Transverse colon (tissue), 4 donors: ENCODE measurements at regions of chr13 and their contacts with region 1.

Region 1: DNA sequence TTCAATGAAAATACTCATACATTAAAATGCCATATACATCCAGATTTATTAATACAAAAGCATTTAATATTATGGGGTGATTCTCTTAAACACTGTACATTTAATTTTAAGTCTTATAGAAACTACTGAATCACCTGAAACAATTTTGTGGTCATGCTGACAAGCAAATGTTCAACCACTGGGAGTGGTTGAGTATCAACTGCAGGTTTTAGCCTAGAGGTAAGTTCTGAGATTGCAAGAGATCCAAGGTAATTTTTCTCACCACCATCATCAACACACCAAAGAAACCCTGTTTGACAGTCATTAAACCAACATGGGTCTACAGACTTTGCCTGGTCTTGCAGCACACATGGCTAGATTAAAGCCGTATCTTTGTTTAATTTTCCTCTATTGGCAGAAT is 196.3 kb downstream of the LHFPL6 start:
- DNase-seq: no peak
- H3K4me3 ChIP-seq: no peak overlapping the region
- H3K27ac ChIP-seq: no peak overlapping the region
- H3K4me1 ChIP-seq: peaks cover 0 to 9% (median 0%) of the 10 kb centered on the region in 4 donors
- H3K27me3 ChIP-seq: no peaks in the 10 kb centered on the region
- CTCF ChIP-seq: no peak
- EP300 ChIP-seq: no peak
- POLR2A ChIP-seq: no peak

Region 2: DNA sequence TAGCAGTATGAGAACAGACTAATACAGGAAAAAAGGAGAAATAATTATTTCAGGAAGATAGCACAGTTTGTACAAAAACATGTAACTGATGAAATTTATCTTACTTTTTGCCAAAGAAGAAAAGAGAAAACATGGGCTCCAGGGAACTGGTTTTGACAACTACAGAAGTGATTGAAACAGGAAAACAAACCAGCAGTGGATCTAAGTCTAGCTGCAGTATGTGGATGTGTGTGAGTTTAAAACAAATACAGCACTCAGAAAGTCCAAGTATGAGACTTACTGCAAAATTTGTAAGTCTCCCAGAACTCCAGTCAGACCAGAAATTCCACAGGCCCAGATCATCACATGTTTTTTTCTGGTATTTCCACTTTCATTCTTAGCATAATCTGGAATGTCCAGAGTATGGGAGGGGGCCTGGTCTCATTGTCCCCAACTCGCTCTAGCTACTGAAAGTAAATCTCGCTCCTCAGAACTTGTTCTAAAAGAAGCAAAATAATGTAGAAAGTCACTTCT is 109.0 kb before region 1 on chr13:
- in situ Hi-C with region 1: no loop called
- intact Hi-C with region 1: loop called (anchors 1 kb)
- DNase-seq: no peak
- H3K4me3 ChIP-seq: no peak overlapping the region
- H3K27ac ChIP-seq: no peak overlapping the region
- H3K4me1 ChIP-seq: no peaks in the 10 kb centered on the region
- H3K27me3 ChIP-seq: no peaks in the 10 kb centered on the region
- CTCF ChIP-seq: no peak
- EP300 ChIP-seq: no peak
- POLR2A ChIP-seq: no peak

Region 3: GRCh38 chr13:41263261-41264027 is 1856.8 kb after region 1 on chr13 and contains the start of gene MTRF1:
- in situ Hi-C with region 1: no loop called
- intact Hi-C with region 1: loop called (anchors 10 kb)
- DNase-seq: peak; percentile 81
- H3K4me3 ChIP-seq: peak within 1 kb of the TSS; percentile 54 to 67 (median 58)
- H3K27ac ChIP-seq: peak within 1 kb of the TSS; percentile 76 to 87 (median 84)
- H3K4me1 ChIP-seq: peaks cover 4 to 11% (median 6%) of the 10 kb centered on the region in 4 donors
- H3K27me3 ChIP-seq: no peaks in the 10 kb centered on the region
- CTCF ChIP-seq: no peak
- EP300 ChIP-seq: no peak
- POLR2A ChIP-seq: peak; percentile 49
- total RNA-seq, gene MTRF1: 7.2 to 19.7 (median 12.7) TPM